Mammary epithelial cell (primary cell): ENCODE measurements at regions of chr11 and their contacts with region 1.

Region 1: DNA sequence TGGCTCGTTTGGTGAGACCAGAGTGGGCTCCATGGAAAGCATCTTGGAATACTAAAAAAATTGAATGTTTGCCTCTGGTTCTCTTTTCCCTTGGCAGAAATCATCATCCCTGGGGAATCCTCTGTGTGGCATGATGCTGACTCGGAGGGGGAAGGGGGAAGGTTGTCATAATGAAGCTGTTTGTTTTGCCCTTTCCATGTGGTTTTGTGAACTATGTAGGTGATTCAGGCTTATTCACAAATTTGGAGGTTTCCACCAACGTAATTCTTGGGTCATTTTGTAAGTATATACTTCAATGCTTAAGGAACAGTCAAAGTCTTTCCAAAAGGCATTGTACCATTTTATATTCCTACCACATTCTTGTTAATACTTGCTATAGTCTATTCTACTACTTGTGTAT is 754.0 kb upstream of the FAT3 start:
- DNase-seq: peak; percentile 26
- H3K4me3 ChIP-seq: no peak overlapping the region
- H3K27ac ChIP-seq: no peak overlapping the region
- H3K4me1 ChIP-seq: no peaks in the 10 kb centered on the region
- H3K27me3 ChIP-seq: no peaks in the 10 kb centered on the region
- CTCF ChIP-seq: no peak

Region 2: GRCh38 chr11:91527380-91528030 is 56.8 kb after region 1 on chr11:
- CTCF ChIA-PET with region 1: no interaction called
- dilution Hi-C with region 1: loop called (anchors 5 kb)
- in situ Hi-C with region 1: no loop called
- intact Hi-C with region 1: no loop called
- DNase-seq: no peak
- H3K4me3 ChIP-seq: no peak overlapping the region
- H3K27ac ChIP-seq: no peak overlapping the region
- H3K4me1 ChIP-seq: no peaks in the 10 kb centered on the region
- H3K27me3 ChIP-seq: peaks cover 2% of the 10 kb centered on the region
- CTCF ChIP-seq: no peak